ENCODE measurements at regions of chr5 and their contacts with region 1.

Region 1: DNA sequence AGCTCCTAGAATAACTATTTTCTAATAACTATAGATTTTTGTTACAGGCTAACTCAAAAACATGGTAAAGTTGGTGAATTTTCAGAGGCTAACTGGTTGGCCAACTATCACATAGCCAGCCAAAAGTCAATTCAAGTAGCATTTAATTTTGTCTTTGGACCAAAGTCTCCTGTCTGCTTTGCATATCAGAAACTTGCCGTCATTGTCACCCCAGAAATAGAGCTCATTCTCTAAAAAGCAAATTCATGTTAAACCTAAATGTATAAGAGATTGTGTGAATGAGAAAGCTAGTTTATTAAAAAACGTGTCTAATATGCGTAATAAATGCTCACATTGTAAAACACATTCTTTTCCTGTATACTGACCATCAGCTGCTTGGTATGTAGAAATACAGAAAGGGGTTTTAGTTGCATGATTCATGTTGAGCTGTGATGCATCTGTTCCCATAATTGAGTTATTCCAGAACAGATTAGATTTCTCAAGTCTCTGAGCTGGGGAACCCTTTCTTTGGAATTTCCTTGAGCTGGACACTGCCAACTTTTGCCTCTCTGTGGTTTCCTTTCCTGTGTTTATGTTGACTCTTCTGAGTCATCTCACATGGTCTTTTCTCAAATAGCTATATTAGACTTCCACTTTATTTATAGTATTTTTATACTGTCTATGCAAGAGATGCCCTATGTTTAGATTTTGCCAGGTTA is 7.3 kb downstream of the SRFBP1 start:
- DNase-seq: no peak
- ATAC-seq: peak; percentile 74 to 92
- H3K4me3 ChIP-seq: no peak overlapping the region
- H3K27ac ChIP-seq: peak overlapping the region; percentile 31
- H3K4me1 ChIP-seq: peaks cover 22% of the 10 kb centered on the region
- H3K27me3 ChIP-seq: no peaks in the 10 kb centered on the region
- CTCF ChIP-seq: no peak

Region 2: DNA sequence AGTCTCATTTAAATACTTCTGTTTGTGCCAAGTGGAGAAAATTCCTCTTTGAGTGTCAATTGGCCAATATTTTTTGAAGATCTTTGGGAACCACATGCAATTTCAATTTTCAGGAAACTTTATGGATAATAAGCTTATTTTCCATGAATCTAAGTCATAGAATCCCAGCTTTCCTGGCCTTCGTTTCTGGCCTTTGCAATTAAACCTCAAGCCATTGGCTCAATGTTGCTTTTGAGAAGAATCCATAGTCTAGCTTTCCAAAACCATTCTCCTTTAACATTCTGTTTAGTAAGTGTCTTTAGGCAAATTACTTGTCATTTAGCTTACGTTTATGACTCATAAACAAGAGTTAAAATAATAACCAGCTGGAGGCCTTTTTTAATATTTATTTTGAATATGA is 262.4 kb before region 1 on chr5:
- intact Hi-C with region 1: no loop called
- DNase-seq: no peak
- ATAC-seq: no peak
- H3K4me3 ChIP-seq: no peak overlapping the region
- H3K27ac ChIP-seq: no peak overlapping the region
- H3K4me1 ChIP-seq: no peaks in the 10 kb centered on the region
- H3K27me3 ChIP-seq: no peaks in the 10 kb centered on the region
- CTCF ChIP-seq: no peak

Region 3: DNA sequence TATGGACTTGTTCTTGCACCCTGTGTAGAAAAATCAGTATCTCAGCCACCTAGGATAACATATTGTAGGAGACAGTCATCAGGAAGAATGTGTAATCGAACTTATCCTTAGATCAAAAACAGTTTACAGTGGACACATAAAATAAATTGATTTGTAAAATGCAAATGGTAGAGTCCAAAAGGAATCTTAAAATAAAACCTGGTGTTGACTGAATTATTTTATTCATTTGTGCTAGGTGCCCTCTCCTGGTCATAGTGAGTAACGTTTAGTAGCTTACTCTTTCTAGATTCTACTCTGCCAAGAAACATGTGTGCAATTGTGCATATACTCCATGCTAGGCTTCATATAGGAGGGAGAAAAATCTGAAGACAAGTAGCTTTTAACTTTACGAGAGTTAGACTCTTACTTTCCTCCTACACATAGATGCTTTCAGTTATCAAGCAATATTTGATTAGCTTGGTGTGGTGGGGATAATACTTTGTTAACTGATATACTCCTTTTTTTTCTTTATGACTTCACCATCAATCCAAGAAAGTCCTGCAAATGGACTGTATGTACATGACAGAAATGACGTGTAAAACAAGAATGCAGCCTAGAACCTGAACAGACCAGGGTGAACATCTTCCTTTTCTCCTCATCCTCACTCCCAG is 132.7 kb after region 1 on chr5:
- intact Hi-C with region 1: loop called (anchors 10 kb)
- DNase-seq: no peak
- ATAC-seq: peak in 1 of 2 donors; percentile 51
- H3K4me3 ChIP-seq: no peak overlapping the region
- H3K27ac ChIP-seq: no peak overlapping the region
- H3K4me1 ChIP-seq: no peaks in the 10 kb centered on the region
- H3K27me3 ChIP-seq: no peaks in the 10 kb centered on the region
- CTCF ChIP-seq: peak; percentile 53

Region 4: GRCh38 chr5:122805481-122805880 is 836.4 kb after region 1 on chr5:
- intact Hi-C with region 1: no loop called
- DNase-seq: no peak
- ATAC-seq: no peak
- H3K4me3 ChIP-seq: no peak overlapping the region
- H3K27ac ChIP-seq: no peak overlapping the region
- H3K4me1 ChIP-seq: no peaks in the 10 kb centered on the region
- H3K27me3 ChIP-seq: no peaks in the 10 kb centered on the region
- CTCF ChIP-seq: no peak